Natural killer cell (primary cell): ENCODE measurements at regions of chr4 and their contacts with region 1.

Region 1: GRCh38 chr4:80500613-80501012 is 165.1 kb downstream of the CFAP299 start:
- DNase-seq: peak in 1 of 2 donors; percentile 71
- ATAC-seq: peak; percentile 70 to 90 (median 79)
- H3K4me3 ChIP-seq: no peak overlapping the region
- H3K4me3 Mint-ChIP-seq: no peak overlapping the region
- H3K27ac ChIP-seq: no peak overlapping the region
- H3K27ac Mint-ChIP-seq: peak overlapping the region; percentile 27 to 61
- H3K4me1 ChIP-seq: peaks cover 4% of the 10 kb centered on the region
- H3K4me1 Mint-ChIP-seq: peaks cover 12 to 13% of the 10 kb centered on the region in 2 donors
- H3K27me3 ChIP-seq: no peaks in the 10 kb centered on the region
- H3K27me3 Mint-ChIP-seq: no peaks in the 10 kb centered on the region
- CTCF ChIP-seq: no peak

Region 2: GRCh38 chr4:79626101-79626500 is 874.5 kb before region 1 on chr4:
- intact Hi-C with region 1: no loop called
- DNase-seq: no peak
- ATAC-seq: no peak
- H3K4me3 ChIP-seq: no peak overlapping the region
- H3K4me3 Mint-ChIP-seq: no peak overlapping the region
- H3K27ac ChIP-seq: no peak overlapping the region
- H3K27ac Mint-ChIP-seq: no peak overlapping the region
- H3K4me1 ChIP-seq: no peaks in the 10 kb centered on the region
- H3K4me1 Mint-ChIP-seq: peaks cover 0 to 7% of the 10 kb centered on the region in 2 donors
- H3K27me3 ChIP-seq: no peaks in the 10 kb centered on the region
- H3K27me3 Mint-ChIP-seq: no peaks in the 10 kb centered on the region
- CTCF ChIP-seq: no peak

Region 3: DNA sequence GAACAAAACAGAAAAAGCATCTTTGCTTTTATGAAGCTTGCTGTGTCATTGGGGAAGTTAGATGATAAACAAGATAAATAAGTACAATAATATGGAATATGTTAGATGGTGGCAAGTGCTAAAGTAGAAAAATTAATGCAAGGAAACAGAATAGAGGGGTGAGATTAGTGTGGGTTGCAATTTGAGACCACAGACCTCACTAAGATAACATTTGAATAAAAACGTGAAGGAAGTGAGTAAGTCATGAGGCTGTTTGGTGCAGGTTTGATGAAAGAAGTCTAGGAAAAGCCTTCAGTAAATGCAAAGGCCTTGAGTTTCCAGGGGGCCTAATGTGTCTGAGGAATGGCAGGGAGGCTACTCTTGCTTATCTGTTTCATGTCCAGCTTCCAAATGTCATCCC is 62.6 kb before region 1 on chr4:
- intact Hi-C with region 1: loop called (anchors 5 kb)
- DNase-seq: peak in 1 of 2 donors; percentile 19
- ATAC-seq: peak; percentile 54 to 71 (median 58)
- H3K4me3 ChIP-seq: no peak overlapping the region
- H3K4me3 Mint-ChIP-seq: peak overlapping the region; percentile 21
- H3K27ac ChIP-seq: peak overlapping the region; percentile 40
- H3K27ac Mint-ChIP-seq: peak overlapping the region; percentile 71 to 85
- H3K4me1 ChIP-seq: peaks cover 18% of the 10 kb centered on the region
- H3K4me1 Mint-ChIP-seq: peaks cover 27 to 35% of the 10 kb centered on the region in 2 donors
- H3K27me3 ChIP-seq: no peaks in the 10 kb centered on the region
- H3K27me3 Mint-ChIP-seq: no peaks in the 10 kb centered on the region
- CTCF ChIP-seq: no peak